Activated CD8-positive, alpha-beta T cell treated with anti-CD3 and anti-CD28 coated beads, Interleukin-2, amount 10 ng/mL, durations not matched to agents 7 days and 5 days (primary cell): ENCODE measurements at regions of chr16 and their contacts with region 1.

Region 1: DNA sequence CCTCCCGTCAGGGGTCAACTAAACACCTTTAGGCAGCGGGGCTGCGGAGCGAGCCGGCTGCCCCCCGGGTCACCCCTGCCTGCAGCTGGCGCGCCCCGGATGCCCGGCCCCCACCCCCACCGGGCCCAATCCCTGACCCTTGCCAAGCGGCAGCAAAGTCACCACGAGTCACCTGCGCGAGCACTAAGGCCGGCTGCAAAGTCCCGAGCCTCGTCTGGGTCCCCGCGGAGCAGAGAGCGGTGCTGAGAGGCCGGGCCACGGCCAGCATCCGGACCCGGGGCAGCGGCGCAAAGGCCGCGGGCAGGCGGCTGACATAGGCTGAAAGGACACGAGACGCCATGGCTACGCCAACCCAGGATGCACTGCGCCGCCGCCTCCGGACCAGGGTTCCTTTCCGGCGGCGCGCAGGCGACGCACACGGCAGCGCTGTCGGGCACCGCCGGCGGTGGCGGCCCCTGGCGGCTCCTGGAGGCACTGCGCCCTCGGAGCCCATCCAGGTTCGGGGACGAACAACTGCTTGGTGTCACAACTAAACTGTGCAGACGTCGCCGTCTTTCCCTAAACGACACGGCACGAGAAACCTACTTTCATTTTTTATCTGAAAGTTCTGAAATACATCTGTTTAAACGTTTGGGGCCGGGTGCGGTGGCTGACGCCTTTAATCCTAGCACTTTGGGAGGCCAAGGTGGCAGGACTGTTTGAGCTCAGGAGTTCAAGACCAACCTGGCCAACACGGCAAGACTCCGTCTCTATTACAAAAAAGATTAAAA is at the start of gene NDUFAB1:
- DNase-seq: peak; percentile 93
- ATAC-seq: peak; percentile 99
- H3K4me3 Mint-ChIP-seq: peak within 1 kb of the TSS; percentile 89
- H3K27ac Mint-ChIP-seq: peak within 1 kb of the TSS; percentile 80
- H3K4me1 Mint-ChIP-seq: peaks cover 29% of the 10 kb centered on the region
- H3K27me3 Mint-ChIP-seq: no peaks in the 10 kb centered on the region
- total RNA-seq, gene NDUFAB1: 100 to 105 TPM

Region 2: GRCh38 chr16:23556881-23557778 is 39.0 kb before region 1 on chr16 and contains the starts of genes EARS2 and UBFD1:
- CTCF ChIA-PET with region 1: interaction called, 13 read pairs
- POLR2A ChIA-PET with region 1: interaction called, 5 read pairs
- DNase-seq: peak; percentile 98
- ATAC-seq: peak; percentile 92
- H3K4me3 Mint-ChIP-seq: peak within 1 kb of the TSS; percentile 95
- H3K27ac Mint-ChIP-seq: peak within 1 kb of the TSS; percentile 94
- H3K4me1 Mint-ChIP-seq: peaks cover 35% of the 10 kb centered on the region
- H3K27me3 Mint-ChIP-seq: no peaks in the 10 kb centered on the region
- total RNA-seq, gene EARS2: 16.3 to 16.4 TPM
- total RNA-seq, gene UBFD1: 40.2 to 46.3 TPM

Region 3: DNA sequence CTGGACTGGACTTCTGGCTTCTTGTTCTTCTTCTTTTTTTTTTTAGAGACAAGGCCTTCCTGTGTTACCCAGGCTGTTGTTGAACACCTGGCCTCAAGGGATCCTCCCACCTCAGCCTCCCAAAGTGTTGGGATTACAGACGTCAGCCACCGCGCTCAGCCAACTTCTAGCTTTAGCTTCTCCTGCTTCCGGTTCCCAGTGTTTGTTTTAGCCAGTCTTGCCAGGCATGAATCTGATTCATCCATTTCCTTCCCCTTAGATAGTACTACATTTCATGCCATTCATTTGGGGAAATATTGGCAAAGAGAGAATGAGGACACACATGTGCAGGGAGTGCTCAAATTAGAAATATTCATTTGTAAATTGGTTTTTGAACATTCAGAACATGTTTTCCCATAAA is 12.1 kb after region 1 on chr16:
- CTCF ChIA-PET with region 1: interaction called, 15 read pairs
- POLR2A ChIA-PET with region 1: no interaction called
- DNase-seq: no peak
- ATAC-seq: no peak
- H3K4me3 Mint-ChIP-seq: no peak overlapping the region
- H3K27ac Mint-ChIP-seq: no peak overlapping the region
- H3K4me1 Mint-ChIP-seq: no peaks in the 10 kb centered on the region
- H3K27me3 Mint-ChIP-seq: no peaks in the 10 kb centered on the region

Region 4: GRCh38 chr16:23640931-23641765 is 45.0 kb after region 1 on chr16 and contains the starts of genes DCTN5 and PALB2:
- CTCF ChIA-PET with region 1: interaction called, 10 read pairs
- POLR2A ChIA-PET with region 1: interaction called, 4 read pairs
- DNase-seq: peak; percentile 92
- ATAC-seq: peak; percentile 97
- H3K4me3 Mint-ChIP-seq: peak within 1 kb of the TSS; percentile 99
- H3K27ac Mint-ChIP-seq: peak within 1 kb of the TSS; percentile 98
- H3K4me1 Mint-ChIP-seq: peaks cover 36% of the 10 kb centered on the region
- H3K27me3 Mint-ChIP-seq: no peaks in the 10 kb centered on the region
- total RNA-seq, gene DCTN5: 71.9 to 72.6 TPM
- total RNA-seq, gene PALB2: 22.7 to 26.1 TPM

Region 5: DNA sequence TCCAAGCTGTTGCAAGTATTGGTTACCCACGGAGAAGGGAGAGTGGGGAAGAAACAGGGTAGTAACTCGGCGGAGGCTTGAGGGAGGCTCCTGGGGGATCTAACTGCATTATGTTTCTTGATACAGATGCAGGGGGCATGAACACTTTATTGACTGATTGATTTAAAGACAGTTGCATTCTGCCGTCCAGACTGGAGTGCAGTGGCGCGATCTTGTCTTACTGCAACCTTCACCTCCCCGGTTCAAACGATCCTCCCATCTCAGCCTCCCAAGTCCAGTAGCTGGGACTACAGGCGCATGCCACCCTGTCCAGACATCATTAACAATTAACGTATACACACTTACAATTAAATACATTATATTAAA is 132.0 kb after region 1 on chr16:
- CTCF ChIA-PET with region 1: no interaction called
- POLR2A ChIA-PET with region 1: no interaction called
- DNase-seq: no peak
- ATAC-seq: no peak
- H3K4me3 Mint-ChIP-seq: no peak overlapping the region
- H3K27ac Mint-ChIP-seq: no peak overlapping the region
- H3K4me1 Mint-ChIP-seq: peaks cover 4% of the 10 kb centered on the region
- H3K27me3 Mint-ChIP-seq: peaks cover 10% of the 10 kb centered on the region